MCF 10A (cell line): ENCODE measurements at regions of chr2 and their contacts with region 1.

Region 1: DNA sequence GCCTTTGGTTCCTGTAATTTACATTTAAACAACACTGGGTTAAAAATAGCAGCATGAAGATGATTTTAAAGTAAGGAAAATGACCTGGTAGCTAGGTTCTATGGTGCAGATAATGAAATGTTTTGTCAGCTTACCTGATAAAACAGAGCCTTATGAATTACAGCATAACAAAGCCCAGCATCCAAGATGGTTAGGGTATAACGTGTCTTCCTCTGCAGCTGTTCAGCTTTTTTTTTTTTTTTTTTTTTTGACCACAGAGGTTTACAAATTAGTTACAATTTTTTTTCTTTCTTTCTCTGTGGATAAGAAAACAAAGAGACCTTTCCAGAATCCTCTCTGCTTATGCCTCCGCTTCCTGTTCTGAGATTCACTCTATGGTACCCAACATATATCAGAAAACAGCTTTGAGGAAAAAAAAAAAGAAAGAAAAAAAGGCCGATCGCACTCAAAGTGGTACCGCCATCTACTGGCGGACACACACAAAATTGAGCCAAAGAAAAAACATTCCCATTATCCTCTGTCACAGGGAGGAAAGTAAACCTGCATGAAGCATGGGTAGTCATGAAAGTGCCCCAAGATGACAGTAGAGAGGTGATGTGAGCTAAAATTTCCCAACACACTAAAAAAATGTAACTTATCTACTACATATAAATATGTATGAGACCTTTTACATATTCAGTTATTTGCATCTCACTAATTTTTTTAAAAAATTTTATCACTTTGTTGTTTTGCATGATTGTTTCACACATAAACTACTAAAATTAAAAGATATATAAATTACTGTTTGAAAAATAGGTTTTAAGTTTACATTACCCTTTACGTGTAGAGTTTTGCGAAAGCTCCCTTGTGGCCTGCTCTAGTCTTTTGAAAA is at the start of gene SCN3A:
- DNase-seq: peak; percentile 58
- H3K4me3 Mint-ChIP-seq: no peak within 1 kb of the TSS
- H3K27ac Mint-ChIP-seq: no peak within 1 kb of the TSS
- H3K4me1 Mint-ChIP-seq: no peaks in the 10 kb centered on the region
- H3K27me3 Mint-ChIP-seq: peaks cover 72% of the 10 kb centered on the region
- CTCF ChIP-seq: peak; percentile 70
- total RNA-seq, gene SCN3A: not detected in 2 replicates

Region 2: DNA sequence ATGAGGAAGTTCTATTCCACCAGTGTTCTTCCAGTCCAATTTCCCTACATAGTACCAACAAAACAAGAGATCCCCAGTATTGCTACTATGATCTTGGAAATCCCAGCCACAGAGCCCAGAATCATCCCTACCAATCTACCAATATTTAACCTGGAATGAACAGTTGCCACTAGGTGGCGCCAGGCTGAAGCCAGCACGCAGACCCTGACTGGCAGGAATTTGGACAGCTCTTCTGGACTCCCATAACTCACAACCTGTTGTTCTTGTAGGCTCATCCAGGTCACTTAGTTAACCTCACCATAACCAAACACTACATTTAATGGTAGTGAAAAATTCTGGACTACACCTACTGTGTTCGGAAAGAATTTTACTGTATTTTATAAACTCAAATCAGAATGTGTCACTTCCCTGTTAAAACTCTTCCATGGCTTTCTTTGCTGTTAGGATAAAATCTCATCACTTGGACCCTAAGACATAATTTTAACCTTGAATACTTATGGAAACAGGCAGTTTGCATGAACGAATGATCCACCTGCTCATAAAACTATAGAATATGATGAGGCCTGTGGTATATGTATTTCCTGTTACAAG is 188.8 kb before region 1 on chr2:
- CTCF ChIA-PET with region 1: interaction called, 132 read pairs
- POLR2A ChIA-PET with region 1: no interaction called
- intact Hi-C with region 1: loop called (anchors 1 kb)
- DNase-seq: peak; percentile 73
- H3K4me3 Mint-ChIP-seq: no peak overlapping the region
- H3K27ac Mint-ChIP-seq: no peak overlapping the region
- H3K4me1 Mint-ChIP-seq: peaks cover 5% of the 10 kb centered on the region
- H3K27me3 Mint-ChIP-seq: peaks cover 23% of the 10 kb centered on the region
- CTCF ChIP-seq: peak; percentile 61

Region 3: DNA sequence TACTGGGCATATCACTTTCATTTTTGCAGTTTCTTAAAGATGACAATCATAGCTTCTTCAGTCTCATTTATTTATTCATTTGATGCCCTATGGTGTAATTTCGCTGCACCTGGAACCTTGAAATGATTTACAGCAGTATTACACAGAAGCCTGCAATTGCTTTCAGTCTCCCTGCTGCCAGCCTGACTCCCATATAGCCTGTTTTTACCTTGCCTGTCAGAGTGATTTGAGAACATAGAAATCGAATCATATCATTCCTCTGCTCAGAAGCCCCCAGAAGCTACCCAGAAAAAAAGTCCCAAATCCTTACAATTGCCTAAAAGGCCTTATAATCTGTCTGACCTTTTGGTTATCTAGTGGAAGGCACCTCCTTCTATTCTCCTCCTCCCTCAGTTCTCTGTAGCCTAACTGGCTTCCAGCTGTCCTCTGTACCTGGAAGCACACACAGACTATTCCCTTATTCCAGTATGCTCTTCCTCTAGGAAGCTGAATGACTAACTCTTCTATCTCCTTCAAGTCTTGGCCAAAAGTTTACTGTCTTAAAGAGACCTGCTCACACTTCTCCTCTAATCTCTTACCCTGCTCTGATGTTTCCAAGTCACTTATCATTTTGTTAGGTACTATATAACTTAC is 12.7 kb before region 1 on chr2:
- CTCF ChIA-PET with region 1: interaction called, 22 read pairs
- POLR2A ChIA-PET with region 1: no interaction called
- intact Hi-C with region 1: no loop called
- DNase-seq: no peak
- H3K4me3 Mint-ChIP-seq: no peak overlapping the region
- H3K27ac Mint-ChIP-seq: no peak overlapping the region
- H3K4me1 Mint-ChIP-seq: no peaks in the 10 kb centered on the region
- H3K27me3 Mint-ChIP-seq: peaks cover 97% of the 10 kb centered on the region
- CTCF ChIP-seq: no peak

Region 4: DNA sequence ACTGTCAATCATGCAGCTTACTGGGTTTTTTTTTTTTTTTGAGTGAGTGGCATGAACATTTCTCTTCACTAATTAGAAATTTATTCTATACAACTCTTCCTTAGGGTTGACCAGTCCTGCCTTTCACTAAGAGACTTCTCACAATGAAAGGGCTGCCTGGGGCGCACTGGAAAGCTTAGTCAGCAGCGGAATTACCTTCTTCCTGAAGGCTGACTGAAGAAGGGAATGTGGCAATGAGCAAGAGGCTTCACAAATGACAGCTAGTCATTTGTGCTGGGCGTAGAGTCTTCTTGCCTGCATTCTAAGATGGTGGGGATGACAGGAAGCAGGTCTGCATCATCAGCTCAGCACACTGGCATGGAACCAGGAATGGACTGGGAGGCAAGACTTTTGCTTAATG is 15.6 kb after region 1 on chr2:
- CTCF ChIA-PET with region 1: interaction called, 15 read pairs
- POLR2A ChIA-PET with region 1: no interaction called
- intact Hi-C with region 1: no loop called
- DNase-seq: peak; percentile 28
- H3K4me3 Mint-ChIP-seq: no peak overlapping the region
- H3K27ac Mint-ChIP-seq: no peak overlapping the region
- H3K4me1 Mint-ChIP-seq: no peaks in the 10 kb centered on the region
- H3K27me3 Mint-ChIP-seq: peaks cover 85% of the 10 kb centered on the region
- CTCF ChIP-seq: no peak